ENCODE measurements at regions of chr1 and their contacts with region 1.

Region 1: DNA sequence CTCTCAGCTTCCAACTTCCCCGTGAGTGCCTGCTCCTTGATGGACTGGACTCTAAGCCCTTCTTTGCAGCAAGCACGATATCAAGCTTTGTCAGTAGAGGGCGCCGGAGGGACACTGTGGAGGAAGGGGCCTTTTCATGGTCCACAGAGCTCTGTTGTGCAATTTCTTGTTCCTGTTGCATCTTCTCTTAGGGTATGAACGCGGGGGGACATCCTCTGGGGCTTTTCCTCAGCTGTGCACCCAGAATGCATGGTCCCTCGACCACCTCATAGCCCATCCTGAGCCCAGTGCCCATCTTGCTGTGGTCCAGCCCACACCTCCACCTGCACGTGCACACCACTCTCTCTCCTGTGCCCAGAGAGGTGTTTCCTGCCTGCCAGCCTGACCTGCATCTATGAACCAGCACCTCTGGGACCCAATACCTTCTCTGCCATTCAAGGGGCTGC is 556.8 kb downstream of the PTPRU start:
- DNase-seq: peak; percentile 41 to 90
- H3K4me3 ChIP-seq: no peak overlapping the region
- H3K27ac ChIP-seq: no peak overlapping the region
- H3K4me1 ChIP-seq: no peaks in the 10 kb centered on the region
- H3K27me3 ChIP-seq: no peaks in the 10 kb centered on the region
- CTCF ChIP-seq: peak; percentile 50 to 71 (median 52)

Region 2: DNA sequence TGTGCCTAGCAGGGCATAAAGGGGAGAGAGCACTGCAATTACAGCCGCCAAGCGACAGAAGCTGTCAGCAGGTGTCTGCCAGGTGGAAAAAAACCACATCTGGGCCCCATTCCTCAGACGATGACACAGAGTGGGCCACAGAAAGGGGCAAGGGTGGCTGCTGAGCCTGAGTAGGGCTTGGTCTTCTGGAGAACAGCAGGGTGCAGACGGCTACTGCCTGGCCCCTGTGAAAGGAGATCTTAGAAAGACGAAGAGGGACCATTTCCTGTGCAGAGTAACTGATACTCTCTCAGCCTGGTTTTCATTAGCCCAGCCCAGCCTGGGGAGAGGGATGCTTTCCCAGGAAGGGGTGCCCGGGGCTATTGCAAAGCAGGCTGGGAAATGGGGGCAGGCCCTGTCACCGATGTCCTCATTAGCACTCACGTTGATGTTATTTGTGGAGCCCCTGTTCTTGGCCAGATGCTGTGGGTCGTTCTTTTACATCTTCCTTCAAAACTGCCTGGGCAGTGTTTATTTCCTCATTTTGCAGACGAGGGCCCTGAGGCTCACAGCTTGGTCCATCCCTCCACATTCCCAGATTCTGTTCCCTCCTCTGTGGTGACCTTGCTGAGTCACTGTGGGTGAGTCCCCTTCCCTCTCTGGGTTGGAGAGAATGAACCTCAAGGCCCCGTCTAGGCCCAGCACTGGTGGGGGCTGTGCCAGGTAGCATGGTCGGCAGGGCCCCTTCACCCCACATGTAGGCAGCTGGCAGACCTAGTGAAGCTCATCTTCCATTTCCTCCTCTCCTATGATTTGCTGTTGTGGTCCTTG is 84.0 kb before region 1 on chr1:
- intact Hi-C with region 1: loop called (anchors 5 kb)
- DNase-seq: no peak
- H3K4me3 ChIP-seq: no peak overlapping the region
- H3K27ac ChIP-seq: peak overlapping the region; percentile 87
- H3K4me1 ChIP-seq: peaks cover 22 to 33% of the 10 kb centered on the region in 2 donors
- H3K27me3 ChIP-seq: no peaks in the 10 kb centered on the region
- CTCF ChIP-seq: no peak

Region 3: GRCh38 chr1:30111431-30111830 is 318.3 kb after region 1 on chr1:
- intact Hi-C with region 1: loop called (anchors 5 kb)
- DNase-seq: no peak
- H3K4me3 ChIP-seq: no peak overlapping the region
- H3K27ac ChIP-seq: no peak overlapping the region
- H3K4me1 ChIP-seq: no peaks in the 10 kb centered on the region
- H3K27me3 ChIP-seq: no peaks in the 10 kb centered on the region
- CTCF ChIP-seq: peak in 2 of 3 experiments; percentile 50 to 65